ENCODE measurements at regions of chr5 and their contacts with region 1.

Region 1: GRCh38 chr5:36739751-36740221 is 133.4 kb downstream of the SLC1A3 start:
- DNase-seq: peak; percentile 17 to 78 (median 58)
- ATAC-seq: peak; percentile 71 to 85 (median 77)
- H3K4me3 ChIP-seq: no peak overlapping the region
- H3K4me3 Mint-ChIP-seq: no peak overlapping the region
- H3K27ac ChIP-seq: no peak overlapping the region
- H3K27ac Mint-ChIP-seq: no peak overlapping the region
- H3K4me1 ChIP-seq: peaks cover 2 to 6% of the 10 kb centered on the region in 2 experiments
- H3K4me1 Mint-ChIP-seq: peaks cover 9 to 10% (median 9%) of the 10 kb centered on the region in 3 donors
- H3K27me3 ChIP-seq: peaks cover 2 to 18% of the 10 kb centered on the region in 2 experiments
- H3K27me3 Mint-ChIP-seq: peaks cover 30 to 35% of the 10 kb centered on the region in 2 donors

Region 2: GRCh38 chr5:36728697-36729543 is 10.9 kb before region 1 on chr5:
- CTCF ChIA-PET with region 1: interaction called, 6 to 10 read pairs
- POLR2A ChIA-PET with region 1: interaction called in 1 of 2 experiments, 3 read pairs
- DNase-seq: peak in 4 of 35 experiments; percentile 9 to 75 (median 21)
- ATAC-seq: peak; percentile 44 to 61 (median 60)
- H3K4me3 ChIP-seq: no peak overlapping the region
- H3K4me3 Mint-ChIP-seq: no peak overlapping the region
- H3K27ac ChIP-seq: no peak overlapping the region
- H3K27ac Mint-ChIP-seq: no peak overlapping the region
- H3K4me1 ChIP-seq: peaks cover 3 to 9% of the 10 kb centered on the region in 2 experiments
- H3K4me1 Mint-ChIP-seq: peaks cover 16 to 19% (median 17%) of the 10 kb centered on the region in 3 donors
- H3K27me3 ChIP-seq: no peaks in the 10 kb centered on the region
- H3K27me3 Mint-ChIP-seq: peaks cover 3 to 7% of the 10 kb centered on the region in 2 donors

Region 3: GRCh38 chr5:36777105-36777757 is 37.4 kb after region 1 on chr5:
- CTCF ChIA-PET with region 1: no interaction called
- POLR2A ChIA-PET with region 1: no interaction called
- DNase-seq: no peak
- ATAC-seq: no peak
- H3K4me3 ChIP-seq: no peak overlapping the region
- H3K4me3 Mint-ChIP-seq: no peak overlapping the region
- H3K27ac ChIP-seq: no peak overlapping the region
- H3K27ac Mint-ChIP-seq: no peak overlapping the region
- H3K4me1 ChIP-seq: no peaks in the 10 kb centered on the region
- H3K4me1 Mint-ChIP-seq: no peaks in the 10 kb centered on the region
- H3K27me3 ChIP-seq: peaks cover 0 to 4% of the 10 kb centered on the region in 2 experiments
- H3K27me3 Mint-ChIP-seq: peaks cover 9 to 12% of the 10 kb centered on the region in 2 donors

Region 4: GRCh38 chr5:36870399-36871040 is 130.7 kb after region 1 on chr5:
- CTCF ChIA-PET with region 1: interaction called, 5 to 26 read pairs
- POLR2A ChIA-PET with region 1: interaction called in 1 of 2 experiments, 3 read pairs
- DNase-seq: peak in 3 of 35 experiments; percentile 5 to 79 (median 11)
- ATAC-seq: peak; percentile 75 to 88 (median 85)
- H3K4me3 ChIP-seq: no peak overlapping the region
- H3K4me3 Mint-ChIP-seq: peak overlapping the region in 1 of 3 donors; percentile 17
- H3K27ac ChIP-seq: no peak overlapping the region
- H3K27ac Mint-ChIP-seq: peak overlapping the region; percentile 41 to 42
- H3K4me1 ChIP-seq: peaks cover 10 to 16% of the 10 kb centered on the region in 2 experiments
- H3K4me1 Mint-ChIP-seq: peaks cover 41 to 53% (median 44%) of the 10 kb centered on the region in 3 donors
- H3K27me3 ChIP-seq: no peaks in the 10 kb centered on the region
- H3K27me3 Mint-ChIP-seq: no peaks in the 10 kb centered on the region

Region 5: GRCh38 chr5:36944607-36945225 is 204.9 kb after region 1 on chr5:
- CTCF ChIA-PET with region 1: interaction called, 8 to 15 read pairs
- POLR2A ChIA-PET with region 1: no interaction called
- DNase-seq: peak in 1 of 35 experiments; percentile 75
- ATAC-seq: no peak
- H3K4me3 ChIP-seq: no peak overlapping the region
- H3K4me3 Mint-ChIP-seq: no peak overlapping the region
- H3K27ac ChIP-seq: no peak overlapping the region
- H3K27ac Mint-ChIP-seq: no peak overlapping the region
- H3K4me1 ChIP-seq: peaks cover 0 to 4% of the 10 kb centered on the region in 2 experiments
- H3K4me1 Mint-ChIP-seq: peaks cover 51 to 66% (median 63%) of the 10 kb centered on the region in 3 donors
- H3K27me3 ChIP-seq: no peaks in the 10 kb centered on the region
- H3K27me3 Mint-ChIP-seq: no peaks in the 10 kb centered on the region

Region 6: DNA sequence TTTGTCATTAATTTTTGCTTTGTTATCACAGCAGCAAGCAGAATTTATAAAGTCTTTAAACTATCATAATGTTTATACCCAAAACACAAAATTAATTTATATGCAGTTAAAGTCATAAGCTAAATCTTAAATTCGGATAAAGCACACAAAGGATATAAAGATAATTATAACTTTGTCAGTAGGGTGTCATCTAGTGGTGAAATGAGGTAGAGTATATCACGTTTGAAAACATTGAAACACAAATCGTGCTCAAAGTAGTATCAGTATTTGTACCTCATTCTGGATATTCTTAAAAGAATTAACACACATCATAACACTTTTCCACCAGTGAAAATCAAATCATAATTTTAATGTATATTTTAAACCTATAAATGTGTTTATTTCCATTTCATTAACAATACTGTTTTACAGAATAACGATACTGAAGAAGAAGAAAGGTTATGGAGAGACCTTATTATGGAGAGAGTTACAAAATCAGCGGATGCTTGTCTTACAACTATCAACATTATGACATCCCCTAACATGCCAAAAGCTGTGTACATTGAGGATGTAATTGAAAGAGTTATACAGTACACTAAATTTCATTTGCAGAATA is 266.3 kb after region 1 on chr5:
- CTCF ChIA-PET with region 1: interaction called, 3 to 14 read pairs
- POLR2A ChIA-PET with region 1: no interaction called
- DNase-seq: peak in 1 of 35 experiments; percentile 35
- ATAC-seq: no peak
- H3K4me3 ChIP-seq: no peak overlapping the region
- H3K4me3 Mint-ChIP-seq: no peak overlapping the region
- H3K27ac ChIP-seq: no peak overlapping the region
- H3K27ac Mint-ChIP-seq: no peak overlapping the region
- H3K4me1 ChIP-seq: no peaks in the 10 kb centered on the region
- H3K4me1 Mint-ChIP-seq: no peaks in the 10 kb centered on the region
- H3K27me3 ChIP-seq: no peaks in the 10 kb centered on the region
- H3K27me3 Mint-ChIP-seq: no peaks in the 10 kb centered on the region